ENCODE measurements at regions of chr1 and their contacts with region 1.

Region 1: DNA sequence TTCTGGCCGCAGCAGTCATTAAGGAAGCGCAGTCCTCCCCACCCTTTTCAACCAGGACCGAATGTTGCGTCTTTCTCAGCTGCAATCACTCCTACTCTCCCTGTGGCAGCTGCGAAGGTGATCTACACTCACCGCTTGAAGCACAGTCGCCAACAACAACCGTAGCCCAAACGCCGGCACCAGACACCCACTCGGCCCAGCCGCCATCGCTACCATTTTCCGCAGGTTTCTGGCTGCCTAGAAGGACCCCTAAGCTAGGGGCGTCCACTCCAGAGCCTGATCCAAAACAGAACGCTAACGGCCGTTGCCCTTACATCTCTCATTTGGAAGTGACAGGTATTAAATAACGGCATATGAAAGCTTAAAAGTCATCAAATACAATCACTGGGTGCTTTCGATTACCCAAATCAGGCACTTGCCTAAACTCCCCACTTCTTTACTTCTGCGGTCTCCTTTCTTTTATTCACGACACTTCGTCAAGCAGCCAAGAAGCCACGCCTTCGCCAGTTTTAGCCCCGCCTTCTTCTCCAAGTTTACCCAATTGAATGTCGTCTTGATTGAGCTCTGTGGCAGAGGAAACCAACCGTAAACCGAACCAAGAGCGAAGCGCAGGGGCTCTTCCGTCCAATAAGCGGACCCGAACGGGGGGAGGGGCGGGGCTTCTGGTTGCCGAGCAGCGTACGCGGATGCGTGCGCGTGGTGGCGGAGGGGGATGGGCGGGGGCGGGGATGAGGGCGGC is at the start of gene SELENOF:
- DNase-seq: peak; percentile 92
- ATAC-seq: peak; percentile 89
- H3K4me3 Mint-ChIP-seq: no peak within 1 kb of the TSS
- H3K27ac Mint-ChIP-seq: no peak within 1 kb of the TSS
- H3K4me1 Mint-ChIP-seq: peaks cover 44% of the 10 kb centered on the region
- H3K27me3 Mint-ChIP-seq: no peaks in the 10 kb centered on the region
- CTCF ChIP-seq: no peak
- total RNA-seq, gene SELENOF: 172 TPM in 2 replicates

Region 2: GRCh38 chr1:85707990-85708828 is 1205.9 kb before region 1 on chr1 and contains the start of gene ZNHIT6:
- CTCF ChIA-PET with region 1: no interaction called
- POLR2A ChIA-PET with region 1: no interaction called
- intact Hi-C with region 1: no loop called
- DNase-seq: peak; percentile 69
- ATAC-seq: peak; percentile 96
- H3K4me3 Mint-ChIP-seq: no peak within 1 kb of the TSS
- H3K27ac Mint-ChIP-seq: no peak within 1 kb of the TSS
- H3K4me1 Mint-ChIP-seq: peaks cover 24% of the 10 kb centered on the region
- H3K27me3 Mint-ChIP-seq: no peaks in the 10 kb centered on the region
- CTCF ChIP-seq: no peak
- total RNA-seq, gene ZNHIT6: 19.6 and 21.1 TPM in 2 replicates

Region 3: DNA sequence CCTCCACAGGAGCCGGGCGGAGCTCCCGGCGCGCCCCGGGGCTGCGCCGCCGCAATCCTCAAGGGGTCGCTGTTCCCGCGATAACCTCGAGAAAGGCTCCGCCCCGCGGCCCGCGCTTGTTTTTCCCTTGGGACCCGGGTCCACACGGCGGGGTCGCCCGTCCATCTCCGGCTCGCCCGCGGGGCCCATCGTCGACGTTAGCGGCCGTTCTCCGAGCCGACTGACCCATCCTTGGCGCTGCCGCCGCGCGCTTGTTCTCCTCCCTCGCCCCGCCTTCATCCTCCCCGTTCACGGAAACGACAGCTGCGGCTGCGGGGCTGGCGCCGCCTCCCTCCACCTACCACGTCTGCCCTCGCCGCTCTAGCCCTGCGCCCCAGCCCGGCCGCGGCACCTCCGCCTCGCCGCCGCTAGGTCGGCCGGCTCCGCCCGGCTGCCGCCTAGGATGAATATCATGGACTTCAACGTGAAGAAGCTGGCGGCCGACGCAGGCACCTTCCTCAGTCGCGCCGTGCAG is 209.6 kb before region 1 on chr1 and contains the start of gene SH3GLB1:
- CTCF ChIA-PET with region 1: no interaction called
- POLR2A ChIA-PET with region 1: interaction called, 49 read pairs
- intact Hi-C with region 1: loop called (anchors 1 kb)
- DNase-seq: peak; percentile 92
- ATAC-seq: peak; percentile 87
- H3K4me3 Mint-ChIP-seq: peak within 1 kb of the TSS; percentile 99
- H3K27ac Mint-ChIP-seq: peak within 1 kb of the TSS; percentile 99
- H3K4me1 Mint-ChIP-seq: peaks cover 46% of the 10 kb centered on the region
- H3K27me3 Mint-ChIP-seq: no peaks in the 10 kb centered on the region
- CTCF ChIP-seq: peak; percentile 26
- total RNA-seq, gene SH3GLB1: 63.8 and 63.9 TPM in 2 replicates

Region 4: GRCh38 chr1:86866665-86867064 is 47.4 kb before region 1 on chr1:
- CTCF ChIA-PET with region 1: no interaction called
- POLR2A ChIA-PET with region 1: interaction called, 24 read pairs
- intact Hi-C with region 1: loop called (anchors 1 kb)
- DNase-seq: no peak
- ATAC-seq: peak; percentile 5
- H3K4me3 Mint-ChIP-seq: peak overlapping the region; percentile 65
- H3K27ac Mint-ChIP-seq: peak overlapping the region; percentile 87
- H3K4me1 Mint-ChIP-seq: peaks cover 44% of the 10 kb centered on the region
- H3K27me3 Mint-ChIP-seq: no peaks in the 10 kb centered on the region
- CTCF ChIP-seq: no peak

Region 5: GRCh38 chr1:86950712-86951419 is 36.8 kb after region 1 on chr1:
- CTCF ChIA-PET with region 1: no interaction called
- POLR2A ChIA-PET with region 1: interaction called, 11 read pairs
- intact Hi-C with region 1: loop called (anchors 5 kb)
- DNase-seq: no peak
- ATAC-seq: no peak
- H3K4me3 Mint-ChIP-seq: no peak overlapping the region
- H3K27ac Mint-ChIP-seq: no peak overlapping the region
- H3K4me1 Mint-ChIP-seq: peaks cover 18% of the 10 kb centered on the region
- H3K27me3 Mint-ChIP-seq: no peaks in the 10 kb centered on the region
- CTCF ChIP-seq: no peak

Region 6: DNA sequence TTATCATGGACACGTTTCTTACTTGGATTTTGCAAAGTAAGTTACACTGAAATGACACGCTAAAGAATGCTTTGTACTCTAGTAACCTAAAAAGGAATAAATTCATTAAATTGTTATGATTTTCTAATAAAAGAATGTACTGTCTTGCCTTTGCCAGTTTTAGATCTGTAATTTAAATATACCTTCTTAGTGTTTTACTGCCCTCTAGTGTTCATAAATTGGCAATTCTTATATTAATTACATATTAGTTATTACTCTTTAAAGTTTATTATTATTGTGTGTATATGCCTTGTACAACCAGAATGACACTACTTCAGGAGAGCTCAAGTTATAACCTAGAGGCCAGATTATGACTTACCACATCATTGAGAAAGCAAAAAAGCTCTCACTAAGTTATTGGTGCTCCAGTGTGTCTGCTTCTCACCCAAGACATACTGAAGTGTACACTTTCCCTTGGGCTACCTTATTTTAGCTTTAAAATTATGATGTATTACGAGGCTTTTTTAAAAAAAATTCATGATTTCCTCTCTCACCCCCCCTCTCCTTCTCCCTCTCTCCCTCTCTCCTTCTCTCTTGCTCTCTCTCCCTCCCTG is 170.3 kb after region 1 on chr1:
- CTCF ChIA-PET with region 1: interaction called, 20 read pairs
- POLR2A ChIA-PET with region 1: interaction called, 6 read pairs
- intact Hi-C with region 1: loop called (anchors 1 kb)
- DNase-seq: no peak
- ATAC-seq: peak; percentile 28
- H3K4me3 Mint-ChIP-seq: no peak overlapping the region
- H3K27ac Mint-ChIP-seq: no peak overlapping the region
- H3K4me1 Mint-ChIP-seq: peaks cover 12% of the 10 kb centered on the region
- H3K27me3 Mint-ChIP-seq: no peaks in the 10 kb centered on the region
- CTCF ChIP-seq: peak; percentile 42